IMR-90 (cell line): ENCODE measurements at regions of chr17 and their contacts with region 1.

Region 1: DNA sequence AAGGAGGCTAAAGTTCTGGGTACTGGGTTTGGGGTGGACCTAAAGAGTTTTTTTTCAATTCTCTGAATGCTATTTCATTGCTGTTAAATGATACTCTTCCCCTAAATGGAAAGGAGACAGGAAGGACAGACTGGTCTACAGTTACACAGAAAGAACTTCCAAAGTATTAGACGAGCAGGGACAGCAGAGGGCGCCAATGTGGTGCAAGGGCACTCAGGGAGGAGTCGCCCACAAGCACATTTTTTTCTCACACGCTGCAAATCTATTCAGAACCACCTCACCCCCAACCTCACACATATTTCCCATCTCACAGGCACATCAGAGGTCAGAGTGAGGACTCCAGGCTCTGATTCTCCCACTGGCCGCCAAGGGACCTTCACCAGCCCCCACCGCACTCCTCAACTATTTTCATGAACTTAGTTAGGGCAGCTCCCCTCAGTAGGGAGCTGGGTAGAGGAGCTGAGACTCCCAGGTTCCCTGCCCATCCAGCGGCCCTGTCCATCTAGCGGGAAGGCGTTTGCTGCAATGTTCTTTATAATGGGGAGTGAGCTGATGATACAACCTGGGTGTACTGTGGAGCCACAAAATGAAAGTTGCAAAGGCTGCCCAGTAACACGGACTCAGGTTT is 6.8 kb upstream of the CA4 start:
- DNase-seq: peak; percentile 83
- ATAC-seq: peak; percentile 85
- H3K4me3 ChIP-seq: no peak overlapping the region
- H3K27ac ChIP-seq: no peak overlapping the region
- H3K4me1 ChIP-seq: peaks cover 11% of the 10 kb centered on the region
- H3K27me3 ChIP-seq: peaks cover 62% of the 10 kb centered on the region
- CTCF ChIP-seq: peak; percentile 85
- POLR2A ChIP-seq: no peak
- RAD21 ChIP-seq: peak; percentile 86

Region 2: DNA sequence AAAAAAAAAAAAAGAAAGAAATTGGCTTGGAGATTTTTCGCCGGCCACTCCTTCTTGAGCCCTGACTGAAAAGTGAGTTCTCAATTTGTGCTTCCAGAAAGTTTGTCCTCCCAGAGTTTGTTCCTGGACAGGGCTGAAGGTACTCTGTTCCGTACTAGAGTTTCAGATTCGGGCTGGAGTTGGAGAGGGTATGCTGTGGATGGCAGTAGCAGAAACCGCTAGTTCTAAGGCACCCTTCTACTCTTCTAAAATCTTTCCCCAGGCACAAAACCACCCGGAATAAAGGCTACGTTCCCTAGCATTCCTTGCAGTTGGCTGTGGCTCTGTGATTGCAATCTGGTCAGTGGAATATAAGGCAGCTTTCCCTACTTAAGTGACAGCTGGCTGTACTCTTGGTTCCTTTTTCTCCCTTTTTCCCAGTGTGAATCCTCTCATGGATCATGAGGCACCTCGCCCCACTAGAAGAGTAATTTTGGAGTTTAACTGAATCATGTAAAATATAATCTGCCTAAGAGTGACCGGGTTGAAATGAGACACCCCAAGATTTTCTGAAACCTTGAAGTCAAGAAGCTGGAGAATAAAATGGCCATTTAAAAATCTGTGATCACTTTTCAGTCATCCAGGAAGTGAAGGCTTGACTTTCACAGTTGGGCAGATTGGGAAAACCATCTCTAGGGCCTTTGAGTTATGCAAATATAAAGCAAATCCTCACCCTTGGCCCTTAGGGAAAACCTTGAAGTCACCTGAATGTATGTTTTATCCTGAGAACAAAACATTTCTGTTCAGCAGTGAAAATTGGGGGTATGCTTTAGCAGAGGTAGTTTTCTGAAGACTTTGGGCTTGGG is 63.4 kb before region 1 on chr17:
- CTCF ChIA-PET with region 1: no interaction called
- POLR2A ChIA-PET with region 1: no interaction called
- dilution Hi-C with region 1: no loop called
- in situ Hi-C with region 1: no loop called
- intact Hi-C with region 1: no loop called
- DNase-seq: no peak
- ATAC-seq: peak; percentile 1; the same call in 1 of the 2 replicates
- H3K4me3 ChIP-seq: peak overlapping the region; percentile 28
- H3K27ac ChIP-seq: peak overlapping the region; percentile 94
- H3K4me1 ChIP-seq: peaks cover 26% of the 10 kb centered on the region
- H3K27me3 ChIP-seq: no peaks in the 10 kb centered on the region
- CTCF ChIP-seq: no peak
- POLR2A ChIP-seq: no peak
- RAD21 ChIP-seq: no peak

Region 3: DNA sequence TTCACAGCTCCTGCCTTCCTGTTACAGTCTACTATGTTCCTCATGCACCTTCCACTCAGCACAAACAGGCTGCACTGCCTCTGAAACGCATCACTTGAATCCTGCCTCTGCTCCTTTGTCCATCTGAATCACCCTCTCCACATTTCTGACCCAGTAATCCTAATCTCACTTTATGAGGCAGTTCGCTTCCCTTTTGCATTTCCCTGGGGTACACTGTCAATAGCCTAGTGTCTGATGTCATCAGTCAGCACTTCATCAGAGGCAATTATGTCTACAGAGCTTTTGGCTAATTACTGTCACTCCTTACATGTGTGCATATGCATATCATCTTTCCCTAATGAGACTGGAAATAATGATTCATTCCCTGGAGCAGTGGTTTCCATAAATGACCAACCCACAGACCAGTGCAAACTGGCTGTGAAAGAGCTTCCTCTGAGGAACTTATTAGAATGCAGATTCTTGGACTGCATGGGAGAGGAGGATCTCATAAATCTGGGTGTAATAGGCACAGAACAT is 30.4 kb after region 1 on chr17:
- CTCF ChIA-PET with region 1: no interaction called
- POLR2A ChIA-PET with region 1: no interaction called
- dilution Hi-C with region 1: no loop called
- in situ Hi-C with region 1: no loop called
- intact Hi-C with region 1: loop called (anchors 2 kb)
- DNase-seq: peak; percentile 24
- ATAC-seq: no peak; the same call in 1 of the 2 replicates
- H3K4me3 ChIP-seq: no peak overlapping the region
- H3K27ac ChIP-seq: no peak overlapping the region
- H3K4me1 ChIP-seq: peaks cover 8% of the 10 kb centered on the region
- H3K27me3 ChIP-seq: no peaks in the 10 kb centered on the region
- CTCF ChIP-seq: no peak
- POLR2A ChIP-seq: no peak
- RAD21 ChIP-seq: no peak

Region 4: DNA sequence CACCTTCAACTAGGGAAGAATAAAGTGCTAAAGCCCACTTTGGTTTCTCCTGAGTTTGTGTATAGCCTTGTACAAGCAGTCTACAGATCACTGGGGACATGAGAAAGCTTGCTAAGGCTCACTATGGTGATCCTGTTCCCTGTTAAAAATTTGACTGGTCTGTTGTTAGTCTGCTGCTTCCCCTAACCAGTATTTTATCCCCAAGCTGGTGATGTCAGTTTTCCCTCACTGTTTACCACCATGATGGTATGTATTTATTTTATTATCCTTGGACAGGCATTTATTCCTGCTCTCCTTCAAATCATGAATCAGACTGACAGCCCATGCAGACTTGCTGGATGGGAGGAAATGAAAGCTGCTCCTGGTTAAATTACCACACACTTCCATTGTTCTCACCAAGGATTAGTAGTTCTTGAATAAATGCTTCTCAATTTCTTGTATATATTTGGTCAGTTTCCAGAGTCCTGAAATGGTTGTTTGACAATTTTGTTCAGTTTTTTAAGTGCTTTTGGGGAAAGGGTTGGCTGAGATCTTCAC is 106.4 kb after region 1 on chr17:
- CTCF ChIA-PET with region 1: no interaction called
- POLR2A ChIA-PET with region 1: no interaction called
- dilution Hi-C with region 1: no loop called
- in situ Hi-C with region 1: no loop called
- intact Hi-C with region 1: no loop called
- DNase-seq: peak; percentile 51
- ATAC-seq: peak; percentile 75
- H3K4me3 ChIP-seq: no peak overlapping the region
- H3K27ac ChIP-seq: peak overlapping the region; percentile 88; the same call in 1 of the 2 replicates
- H3K4me1 ChIP-seq: peaks cover 3% of the 10 kb centered on the region
- H3K27me3 ChIP-seq: no peaks in the 10 kb centered on the region
- CTCF ChIP-seq: no peak
- POLR2A ChIP-seq: no peak
- RAD21 ChIP-seq: no peak

Region 5: GRCh38 chr17:60435244-60436167 is 292.5 kb after region 1 on chr17:
- CTCF ChIA-PET with region 1: no interaction called
- POLR2A ChIA-PET with region 1: no interaction called
- dilution Hi-C with region 1: no loop called
- in situ Hi-C with region 1: no loop called
- intact Hi-C with region 1: loop called (anchors 1 kb)
- DNase-seq: peak; percentile 89
- ATAC-seq: peak; percentile 93
- H3K4me3 ChIP-seq: no peak overlapping the region
- H3K27ac ChIP-seq: peak overlapping the region; percentile 49; the same call in 1 of the 2 replicates
- H3K4me1 ChIP-seq: peaks cover 3% of the 10 kb centered on the region
- H3K27me3 ChIP-seq: no peaks in the 10 kb centered on the region
- CTCF ChIP-seq: peak; percentile 98
- POLR2A ChIP-seq: peak; percentile 49; the same call in 1 of the 2 replicates
- RAD21 ChIP-seq: peak; percentile 97

Region 6: GRCh38 chr17:60630352-60630751 is 487.4 kb after region 1 on chr17:
- CTCF ChIA-PET with region 1: no interaction called
- POLR2A ChIA-PET with region 1: no interaction called
- dilution Hi-C with region 1: no loop called
- in situ Hi-C with region 1: loop called (anchors 25 kb)
- intact Hi-C with region 1: loop called (anchors 10 kb)
- DNase-seq: no peak
- ATAC-seq: no peak
- H3K4me3 ChIP-seq: no peak overlapping the region
- H3K27ac ChIP-seq: no peak overlapping the region
- H3K4me1 ChIP-seq: peaks cover 4% of the 10 kb centered on the region
- H3K27me3 ChIP-seq: no peaks in the 10 kb centered on the region
- CTCF ChIP-seq: no peak
- POLR2A ChIP-seq: no peak
- RAD21 ChIP-seq: no peak